Gastrocnemius medialis (tissue), 4 donors: ENCODE measurements at regions of chr16 and their contacts with region 1.

Region 1: DNA sequence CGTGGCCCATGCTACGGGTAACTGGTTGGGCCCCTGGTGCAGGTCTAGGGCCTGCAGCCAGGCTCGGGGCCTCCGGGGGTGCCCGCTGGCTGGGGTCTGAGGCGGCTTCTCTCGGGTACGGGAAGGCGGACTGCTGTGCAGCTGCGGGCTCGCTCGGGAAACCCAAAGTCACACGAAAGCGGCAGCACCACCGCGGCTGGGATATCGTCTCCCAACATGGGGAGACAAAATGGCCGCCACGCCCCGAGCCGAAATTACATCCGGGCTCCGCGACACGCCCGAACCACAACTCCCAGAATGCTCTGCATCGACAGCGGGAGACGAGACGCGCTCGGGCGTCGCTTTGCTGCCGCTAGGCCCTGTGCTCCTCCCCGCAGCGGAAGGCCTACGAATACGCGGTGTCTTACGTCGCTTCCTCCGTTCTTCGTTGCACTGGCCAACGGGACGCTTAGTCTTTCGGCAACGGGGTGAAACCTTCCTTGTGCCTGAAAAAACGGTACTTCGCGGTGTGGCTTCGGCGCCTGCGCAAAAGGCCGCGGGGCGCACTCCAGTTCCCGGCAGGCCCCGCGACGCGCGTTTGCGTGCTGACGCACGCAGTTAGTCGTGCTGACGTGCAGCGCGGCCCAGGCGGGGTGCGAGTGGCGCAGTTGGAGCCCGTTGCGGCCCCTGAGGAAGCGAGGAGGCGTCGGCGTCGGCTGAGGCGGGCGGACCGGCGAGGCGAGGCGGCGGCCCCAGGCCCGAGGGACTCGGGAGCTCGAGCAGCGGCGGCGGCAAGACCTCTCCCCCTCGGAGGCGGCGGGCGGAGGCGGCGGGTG is at the start of gene SRRM2:
- DNase-seq: peak; percentile 92 to 94
- ATAC-seq: peak; percentile 88 to 91
- H3K4me3 ChIP-seq: peak within 1 kb of the TSS; percentile 83 to 96 (median 88)
- H3K27ac ChIP-seq: peak within 1 kb of the TSS; percentile 90 to 100 (median 97)
- H3K4me1 ChIP-seq: peaks cover 40 to 46% of the 10 kb centered on the region in 2 donors
- H3K27me3 ChIP-seq: no peaks in the 10 kb centered on the region
- CTCF ChIP-seq: peak in 2 of 5 experiments; percentile 9 to 13
- POLR2A ChIP-seq: peak; percentile 98
- total RNA-seq, gene SRRM2: 151 to 205 (median 164) TPM

Region 2: DNA sequence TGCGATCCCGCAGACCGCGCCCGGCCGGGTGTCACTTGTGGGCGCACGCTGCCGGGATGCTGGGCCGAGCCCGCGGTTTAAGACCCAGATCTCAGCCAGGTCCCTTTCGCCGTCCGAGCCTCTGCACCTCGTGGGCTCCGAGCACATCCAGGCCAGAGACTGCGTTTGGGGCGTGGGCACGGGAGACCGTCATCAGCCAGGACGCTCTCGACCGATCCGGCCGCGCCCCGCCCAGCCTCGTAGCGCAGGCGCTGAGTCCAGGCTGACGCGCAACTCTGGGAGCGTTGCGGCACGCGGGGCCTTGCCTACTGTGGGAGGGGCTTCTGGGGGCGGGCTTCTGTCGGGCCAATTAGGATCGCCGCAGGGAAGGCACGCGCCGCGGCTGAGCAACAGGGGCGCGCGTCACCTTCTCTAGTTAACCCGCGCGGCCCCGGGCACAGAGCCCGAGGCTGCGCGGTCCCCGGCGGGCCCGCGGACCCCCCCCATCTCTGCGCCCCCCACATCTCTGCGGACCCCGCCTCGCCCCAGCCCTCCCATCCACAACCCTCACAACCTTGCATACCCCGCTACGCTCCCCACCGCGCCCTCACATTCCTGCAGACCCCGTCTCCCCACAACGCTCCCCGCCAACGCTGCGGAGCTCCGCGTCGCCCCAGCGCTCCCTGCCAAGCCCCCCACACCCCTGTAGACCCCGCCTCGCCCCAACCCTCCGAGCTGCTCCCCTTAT is 220.3 kb before region 1 on chr16:
- in situ Hi-C with region 1: no loop called
- intact Hi-C with region 1: loop called (anchors 5 kb)
- DNase-seq: peak; percentile 98 to 99
- ATAC-seq: peak; percentile 80 to 86
- H3K4me3 ChIP-seq: peak overlapping the region; percentile 75 to 93 (median 85)
- H3K27ac ChIP-seq: peak overlapping the region; percentile 95 to 99 (median 98)
- H3K4me1 ChIP-seq: peaks cover 0 to 12% of the 10 kb centered on the region in 2 donors
- H3K27me3 ChIP-seq: no peaks in the 10 kb centered on the region
- CTCF ChIP-seq: no peak
- POLR2A ChIP-seq: peak; percentile 79 to 83

Region 3: DNA sequence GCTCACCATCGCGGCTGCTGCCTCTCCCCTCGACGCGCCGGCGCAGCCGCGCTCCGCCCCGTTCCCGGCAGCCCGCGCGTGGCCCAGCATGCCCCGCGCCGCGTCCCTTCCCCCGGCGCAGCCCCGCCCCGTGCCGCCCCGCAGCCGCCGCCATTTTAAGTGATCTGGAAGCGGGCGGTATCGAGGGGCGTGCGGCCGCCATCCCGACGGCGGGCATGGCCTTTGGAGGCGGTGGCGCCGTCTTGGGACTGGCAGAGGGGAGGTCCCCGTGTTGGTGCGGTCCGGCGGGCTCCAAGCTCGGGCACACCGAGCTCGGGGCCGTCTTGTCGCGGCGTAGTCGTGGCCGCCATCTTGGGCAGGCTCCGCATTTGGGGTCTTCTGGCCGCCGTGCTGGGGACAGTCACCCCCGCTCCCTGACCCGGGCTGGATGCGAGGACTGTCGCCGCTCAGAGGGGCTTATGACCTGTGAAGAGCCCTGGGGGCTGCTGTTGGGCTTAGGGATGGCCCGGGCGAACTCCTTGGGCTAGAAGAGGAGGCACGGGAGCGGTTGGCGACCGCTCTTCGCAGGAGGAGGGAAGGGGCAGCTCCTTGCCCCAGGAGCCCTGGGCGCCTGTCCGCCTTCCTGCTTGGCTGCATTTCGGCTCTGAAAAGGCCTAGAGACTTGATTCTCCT is 25.1 kb after region 1 on chr16 and contains the start of gene ELOB:
- in situ Hi-C with region 1: no loop called
- intact Hi-C with region 1: loop called (anchors 1 kb)
- DNase-seq: peak; percentile 72 to 82
- ATAC-seq: peak; percentile 89 to 90
- H3K4me3 ChIP-seq: peak within 1 kb of the TSS; percentile 95 to 100 (median 98)
- H3K27ac ChIP-seq: peak within 1 kb of the TSS; percentile 98 to 100 (median 100)
- H3K4me1 ChIP-seq: peaks cover 23 to 31% of the 10 kb centered on the region in 2 donors
- H3K27me3 ChIP-seq: no peaks in the 10 kb centered on the region
- CTCF ChIP-seq: no peak
- POLR2A ChIP-seq: peak; percentile 61 to 78
- total RNA-seq, gene ELOB: 216 to 970 (median 375) TPM

Region 4: DNA sequence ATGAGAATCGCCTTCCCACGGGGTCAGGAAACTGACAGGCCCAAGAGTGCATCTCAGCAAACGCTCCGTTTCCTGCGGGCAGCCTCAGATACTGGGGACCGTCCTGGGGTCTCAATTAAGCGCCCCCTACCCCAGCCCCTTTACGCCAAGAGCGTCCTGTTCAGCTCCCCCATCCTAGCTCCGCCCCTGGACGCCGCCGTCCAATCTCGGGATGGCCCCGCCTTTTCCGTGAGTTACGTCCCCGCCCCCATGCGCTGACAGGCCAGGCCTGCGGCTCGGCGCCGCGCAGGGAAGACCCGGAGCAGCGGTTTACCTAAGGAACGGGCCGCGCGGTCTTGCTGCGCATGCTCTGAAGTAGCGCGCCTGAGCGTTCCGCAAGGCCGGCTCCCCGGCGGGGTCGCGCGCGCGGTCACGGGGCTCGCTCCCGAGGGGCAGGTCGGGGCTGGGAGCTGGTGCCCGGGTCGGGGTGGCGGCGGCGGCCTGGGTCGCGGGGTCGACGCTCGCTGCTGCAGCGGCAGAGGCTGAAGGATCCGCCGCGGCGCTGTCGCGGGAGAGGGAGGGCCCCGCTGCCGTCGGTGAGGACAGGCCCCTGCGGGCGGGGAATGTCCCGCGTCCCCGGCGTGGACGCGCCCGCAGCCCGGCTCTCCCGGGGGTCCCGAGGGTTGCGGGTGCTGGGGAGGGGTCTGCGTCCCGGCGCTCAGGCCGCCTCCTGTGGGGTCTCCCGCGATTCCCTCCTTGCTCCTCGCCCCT is 159.5 kb after region 1 on chr16 and contains the start of gene FLYWCH1:
- in situ Hi-C with region 1: no loop called
- intact Hi-C with region 1: loop called (anchors 5 kb)
- DNase-seq: peak; percentile 97 to 98
- ATAC-seq: peak; percentile 90 to 95
- H3K4me3 ChIP-seq: peak within 1 kb of the TSS; percentile 70 to 91 (median 83)
- H3K27ac ChIP-seq: peak within 1 kb of the TSS; percentile 89 to 97 (median 91)
- H3K4me1 ChIP-seq: peaks cover 13 to 15% of the 10 kb centered on the region in 2 donors
- H3K27me3 ChIP-seq: no peaks in the 10 kb centered on the region
- CTCF ChIP-seq: peak in 1 of 5 experiments; percentile 29
- POLR2A ChIP-seq: peak; percentile 89 to 91
- total RNA-seq, gene FLYWCH1: 41.7 to 49.7 (median 44.0) TPM

Region 5: DNA sequence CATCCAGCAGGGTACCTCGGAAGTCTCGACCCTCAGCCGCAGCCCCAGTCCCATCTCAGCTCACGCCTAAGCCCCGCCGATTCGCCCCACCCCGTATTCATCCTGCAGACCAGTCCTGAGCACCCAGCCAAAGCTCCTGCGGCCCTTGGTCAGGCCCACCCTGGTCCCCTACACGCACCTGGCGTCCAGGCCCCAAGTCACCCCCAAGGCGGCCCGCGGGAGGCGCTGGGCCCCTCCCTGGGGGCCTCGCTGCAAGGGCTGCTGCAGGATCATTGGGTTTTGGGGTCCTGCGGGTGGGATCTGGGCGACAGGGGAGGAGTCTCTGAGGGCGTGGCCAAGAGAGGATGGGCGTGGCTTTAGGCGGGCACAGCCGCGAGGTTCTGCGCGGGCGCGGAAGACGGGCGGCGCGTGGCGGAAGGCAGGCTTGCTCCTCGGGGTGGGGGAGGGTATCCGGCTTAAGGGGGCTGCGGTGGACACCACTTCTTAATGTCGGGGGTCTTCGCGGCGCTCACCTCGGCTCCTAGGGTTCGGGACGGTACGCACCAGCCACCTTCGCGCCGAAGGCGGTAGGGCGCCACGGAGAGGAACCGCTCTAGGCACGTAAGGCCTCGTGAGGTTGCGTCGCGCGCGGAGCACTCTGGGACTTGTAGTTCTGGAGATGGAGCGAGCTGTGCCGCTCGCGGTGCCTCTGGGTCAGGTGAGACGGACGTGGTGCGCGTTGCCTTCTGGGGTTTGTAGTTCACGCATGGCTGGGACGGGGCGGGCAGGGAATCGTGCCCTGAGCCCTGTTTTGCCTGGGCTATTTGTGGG is 271.6 kb after region 1 on chr16 and contains the starts of genes HCFC1R1 and THOC6:
- in situ Hi-C with region 1: no loop called
- intact Hi-C with region 1: loop called (anchors 1 kb)
- DNase-seq: peak; percentile 96 to 97
- ATAC-seq: peak; percentile 46 to 60
- H3K4me3 ChIP-seq: peak within 1 kb of the TSS; percentile 71 to 99 (median 82)
- H3K27ac ChIP-seq: peak within 1 kb of the TSS; percentile 96 to 100 (median 98)
- H3K4me1 ChIP-seq: peaks cover 32 to 62% of the 10 kb centered on the region in 2 donors
- H3K27me3 ChIP-seq: peaks cover 1 to 8% (median 2%) of the 10 kb centered on the region in 3 donors
- CTCF ChIP-seq: no peak
- POLR2A ChIP-seq: peak; percentile 81 to 83
- total RNA-seq, gene HCFC1R1: 41.8 to 124 (median 66.9) TPM
- total RNA-seq, gene THOC6: 15.0 to 31.1 (median 21.5) TPM